Left cardiac atrium (tissue), 4 donors: ENCODE measurements at regions of chr12 and their contacts with region 1.

Region 1: GRCh38 chr12:76464631-76465166 is 94.9 kb downstream of the OSBPL8 start:
- DNase-seq: no peak
- ATAC-seq: peak in 1 of 2 donors; percentile 44

Region 2: DNA sequence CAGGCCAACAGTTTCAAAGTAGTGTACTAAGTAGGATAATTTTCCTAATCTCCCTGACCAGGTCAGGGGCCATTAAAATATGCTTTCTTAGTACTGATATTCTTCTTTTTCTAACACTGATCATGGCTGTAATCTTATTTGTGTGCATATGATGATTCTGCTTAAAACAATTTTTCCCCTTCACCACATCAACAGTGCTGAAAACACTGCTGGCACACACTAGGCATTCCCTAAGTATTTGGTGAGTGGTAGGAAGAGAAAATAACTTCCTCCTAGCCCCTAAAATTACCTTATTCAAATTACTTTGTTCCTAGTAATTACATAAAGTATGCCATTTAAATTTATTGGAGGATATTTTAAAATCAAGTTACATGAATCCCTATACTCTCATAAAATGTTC is 66.6 kb before region 1 on chr12:
- intact Hi-C with region 1: no loop called
- DNase-seq: no peak
- ATAC-seq: no peak

Region 3: GRCh38 chr12:76559400-76560085 is 94.8 kb after region 1 on chr12 and contains the start of gene OSBPL8:
- intact Hi-C with region 1: loop called in 1 of 2 experiments (anchors 5 kb)
- DNase-seq: peak; percentile 96
- ATAC-seq: peak; percentile 97 to 98
- total RNA-seq, gene OSBPL8: 34.5 to 38.8 TPM